ENCODE measurements at regions of chr21 and their contacts with region 1.

Region 1: DNA sequence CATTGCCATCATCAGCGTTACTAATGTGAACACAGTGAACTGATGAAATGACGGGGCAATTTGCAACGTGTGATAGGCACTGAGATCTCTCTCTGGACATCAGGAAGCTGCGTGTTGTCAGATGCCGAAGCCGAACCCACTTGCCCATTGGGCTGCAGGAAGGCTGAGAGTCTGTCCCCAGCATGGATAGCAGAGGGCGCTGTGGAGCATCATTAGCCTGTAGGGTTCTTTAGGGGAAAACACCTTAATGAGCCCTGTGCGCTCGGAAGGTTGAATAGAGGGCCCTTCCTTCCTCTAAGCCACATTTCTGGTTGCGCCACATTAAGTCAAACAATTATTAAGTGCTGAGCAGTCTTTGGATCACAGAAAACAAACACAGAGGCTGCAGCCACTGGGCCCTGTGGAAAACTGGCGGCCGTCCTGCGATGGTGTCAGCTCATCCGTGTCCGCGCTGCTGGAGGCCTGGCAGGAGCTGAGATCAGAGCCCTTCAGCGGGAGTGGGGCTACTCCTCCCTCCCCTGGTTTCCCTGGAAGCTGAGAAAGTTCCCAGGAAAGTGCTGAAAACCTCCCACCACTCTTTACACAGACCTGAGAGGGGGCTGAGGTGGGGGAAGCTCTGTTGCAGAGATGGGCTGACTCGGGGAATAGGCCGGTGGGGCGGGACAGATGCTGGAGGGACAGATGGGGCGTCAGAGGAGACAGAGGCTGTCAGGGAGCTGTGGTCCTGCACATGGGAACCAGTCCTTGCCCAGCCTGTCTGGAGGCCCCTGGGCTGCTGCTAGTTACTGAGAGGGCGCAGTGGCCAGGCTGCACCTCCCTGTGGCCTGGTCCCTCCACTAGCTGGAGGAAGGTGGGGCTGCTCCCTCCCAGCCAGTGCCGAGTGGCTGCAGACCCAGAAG is 12.7 kb downstream of the TFF2 start:
- DNase-seq: peak; percentile 73 to 92 (median 80)
- ATAC-seq: peak; percentile 100
- H3K4me3 Mint-ChIP-seq: peak overlapping the region; percentile 4 to 74 (median 42)
- H3K27ac Mint-ChIP-seq: peak overlapping the region; percentile 22 to 93 (median 74)
- H3K4me1 Mint-ChIP-seq: peaks cover 6 to 12% (median 9%) of the 10 kb centered on the region in 4 donors
- H3K27me3 Mint-ChIP-seq: peaks cover 0 to 8% (median 0%) of the 10 kb centered on the region in 5 donors

Region 2: GRCh38 chr21:42449296-42449927 is 111.3 kb after region 1 on chr21:
- POLR2A ChIA-PET with region 1: interaction called, 14 read pairs
- DNase-seq: no peak
- ATAC-seq: peak in 1 of 2 donors; percentile 5
- H3K4me3 Mint-ChIP-seq: peak overlapping the region in 1 of 10 donors; percentile 70
- H3K27ac Mint-ChIP-seq: peak overlapping the region; percentile 91 to 99 (median 98)
- H3K4me1 Mint-ChIP-seq: peaks cover 15 to 51% (median 40%) of the 10 kb centered on the region in 4 donors
- H3K27me3 Mint-ChIP-seq: peaks cover 0 to 2% (median 0%) of the 10 kb centered on the region in 5 donors